CD4-positive, alpha-beta T cell (primary cell): ENCODE measurements at regions of chr7 and their contacts with region 1.

Region 1: DNA sequence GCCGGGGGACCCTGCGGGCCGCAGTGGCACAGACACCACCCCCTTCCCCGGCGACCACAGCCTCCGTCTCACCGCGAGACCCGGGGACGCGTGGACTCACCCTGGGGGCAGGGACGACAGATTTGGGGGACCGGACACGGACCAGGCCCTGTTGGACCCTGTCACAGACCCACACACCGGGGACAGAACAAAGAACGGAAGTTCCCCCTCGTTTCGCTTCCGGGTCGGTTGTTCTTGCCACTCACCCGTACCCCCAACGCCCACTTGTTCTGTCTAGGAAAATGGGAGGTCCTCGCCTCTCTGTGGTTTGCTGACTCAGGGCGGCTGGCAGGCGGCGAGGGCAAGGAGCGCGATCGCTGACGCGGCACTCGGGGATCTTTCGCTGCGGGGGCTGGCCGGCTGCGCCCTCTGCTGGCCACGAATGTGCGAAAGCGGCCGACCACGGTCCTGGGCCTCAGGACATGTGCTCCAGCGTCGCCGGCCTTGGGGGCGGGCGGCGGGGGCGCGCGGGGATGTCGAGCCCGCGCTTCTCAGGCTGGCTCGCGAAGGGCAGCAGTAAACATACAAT is at the start of gene ZNF3:
- DNase-seq: peak; percentile 92 to 99 (median 96)
- ATAC-seq: peak; percentile 85
- H3K4me3 ChIP-seq: peak within 1 kb of the TSS; percentile 84
- H3K4me3 Mint-ChIP-seq: peak within 1 kb of the TSS; percentile 90
- H3K27ac ChIP-seq: peak within 1 kb of the TSS; percentile 75 to 80
- H3K27ac Mint-ChIP-seq: peak within 1 kb of the TSS; percentile 83
- H3K4me1 ChIP-seq: peaks cover 36% of the 10 kb centered on the region
- H3K4me1 Mint-ChIP-seq: peaks cover 39% of the 10 kb centered on the region
- H3K27me3 ChIP-seq: no peaks in the 10 kb centered on the region
- H3K27me3 Mint-ChIP-seq: no peaks in the 10 kb centered on the region
- CTCF ChIP-seq: peak; percentile 96
- total RNA-seq, gene ZNF3: 38.3 to 40.3 TPM

Region 2: GRCh38 chr7:99098824-99099498 is 982.7 kb before region 1 on chr7:
- CTCF ChIA-PET with region 1: no interaction called
- POLR2A ChIA-PET with region 1: no interaction called
- intact Hi-C with region 1: no loop called
- DNase-seq: no peak
- ATAC-seq: no peak
- H3K4me3 ChIP-seq: no peak overlapping the region
- H3K4me3 Mint-ChIP-seq: no peak overlapping the region
- H3K27ac ChIP-seq: no peak overlapping the region
- H3K27ac Mint-ChIP-seq: no peak overlapping the region
- H3K4me1 ChIP-seq: no peaks in the 10 kb centered on the region
- H3K4me1 Mint-ChIP-seq: peaks cover 50% of the 10 kb centered on the region
- H3K27me3 ChIP-seq: no peaks in the 10 kb centered on the region
- H3K27me3 Mint-ChIP-seq: no peaks in the 10 kb centered on the region
- CTCF ChIP-seq: no peak

Region 3: GRCh38 chr7:99910976-99911375 is 170.6 kb before region 1 on chr7:
- CTCF ChIA-PET with region 1: no interaction called
- POLR2A ChIA-PET with region 1: no interaction called
- intact Hi-C with region 1: loop called (anchors 5 to 10 kb)
- DNase-seq: no peak
- ATAC-seq: no peak
- H3K4me3 ChIP-seq: no peak overlapping the region
- H3K4me3 Mint-ChIP-seq: no peak overlapping the region
- H3K27ac ChIP-seq: no peak overlapping the region
- H3K27ac Mint-ChIP-seq: no peak overlapping the region
- H3K4me1 ChIP-seq: peaks cover 13% of the 10 kb centered on the region
- H3K4me1 Mint-ChIP-seq: peaks cover 67% of the 10 kb centered on the region
- H3K27me3 ChIP-seq: no peaks in the 10 kb centered on the region
- H3K27me3 Mint-ChIP-seq: no peaks in the 10 kb centered on the region
- CTCF ChIP-seq: no peak

Region 4: GRCh38 chr7:100015232-100016209 is 66.1 kb before region 1 on chr7 and contains the start of gene ZKSCAN1:
- CTCF ChIA-PET with region 1: interaction called, 4 read pairs
- POLR2A ChIA-PET with region 1: interaction called, 4 read pairs
- intact Hi-C with region 1: loop called (anchors 1 to 5 kb)
- DNase-seq: peak; percentile 70 to 96 (median 81)
- ATAC-seq: peak; percentile 94
- H3K4me3 ChIP-seq: peak within 1 kb of the TSS; percentile 95
- H3K4me3 Mint-ChIP-seq: peak within 1 kb of the TSS; percentile 97
- H3K27ac ChIP-seq: peak within 1 kb of the TSS; percentile 76 to 91
- H3K27ac Mint-ChIP-seq: peak within 1 kb of the TSS; percentile 94
- H3K4me1 ChIP-seq: peaks cover 31% of the 10 kb centered on the region
- H3K4me1 Mint-ChIP-seq: peaks cover 39% of the 10 kb centered on the region
- H3K27me3 ChIP-seq: no peaks in the 10 kb centered on the region
- H3K27me3 Mint-ChIP-seq: no peaks in the 10 kb centered on the region
- CTCF ChIP-seq: no peak
- total RNA-seq, gene ZKSCAN1: 42.3 to 45.0 TPM

Region 5: DNA sequence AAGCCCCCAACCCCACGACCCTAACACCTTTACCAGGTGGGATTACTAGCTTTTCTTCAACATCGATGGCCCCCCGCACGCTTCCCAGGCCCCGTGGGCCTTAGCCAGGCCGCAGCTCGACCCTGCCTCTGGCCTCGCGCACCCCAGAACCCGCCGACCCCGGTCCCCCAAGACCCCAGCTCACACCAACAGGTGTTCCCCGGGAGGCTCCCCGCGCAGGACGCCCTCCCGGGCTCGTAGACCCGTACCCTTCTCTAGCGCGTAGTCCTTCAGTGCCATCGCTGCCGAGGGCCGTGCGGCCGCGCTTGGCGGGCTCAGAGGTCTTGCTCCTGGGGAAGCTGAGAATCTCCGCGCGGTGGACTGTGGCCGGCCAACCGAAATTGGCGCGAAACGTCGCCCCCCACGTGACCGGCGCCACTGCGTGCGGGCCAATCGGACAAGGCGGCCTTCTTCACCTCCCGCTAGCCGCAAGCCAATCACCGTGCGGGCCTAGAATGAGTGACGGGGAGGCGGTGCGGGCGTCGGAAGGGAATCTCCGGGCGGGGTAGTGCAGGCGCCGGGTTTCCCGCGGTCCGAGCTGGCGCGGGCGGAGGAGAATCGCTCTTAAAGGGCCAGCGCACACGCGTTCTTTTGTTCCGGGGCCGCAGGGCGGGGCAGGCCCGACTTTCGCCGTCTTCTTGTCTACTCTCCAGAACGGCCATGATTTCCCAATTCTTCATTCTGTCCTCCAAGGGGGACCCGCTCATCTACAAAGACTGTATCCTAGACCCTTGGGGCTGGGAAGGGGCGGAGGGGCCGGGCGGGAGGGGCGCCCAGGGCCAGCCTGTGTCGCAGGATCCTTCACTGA is 19.6 kb after region 1 on chr7 and contains the starts of genes AP4M1 and MCM7:
- CTCF ChIA-PET with region 1: interaction called, 14 read pairs
- POLR2A ChIA-PET with region 1: interaction called, 9 read pairs
- intact Hi-C with region 1: loop called (anchors 2 kb)
- DNase-seq: peak; percentile 87 to 98 (median 93)
- ATAC-seq: peak; percentile 85
- H3K4me3 ChIP-seq: peak within 1 kb of the TSS; percentile 97
- H3K4me3 Mint-ChIP-seq: peak within 1 kb of the TSS; percentile 98
- H3K27ac ChIP-seq: peak within 1 kb of the TSS; percentile 90 to 95
- H3K27ac Mint-ChIP-seq: peak within 1 kb of the TSS; percentile 98
- H3K4me1 ChIP-seq: peaks cover 38% of the 10 kb centered on the region
- H3K4me1 Mint-ChIP-seq: peaks cover 47% of the 10 kb centered on the region
- H3K27me3 ChIP-seq: no peaks in the 10 kb centered on the region
- H3K27me3 Mint-ChIP-seq: no peaks in the 10 kb centered on the region
- CTCF ChIP-seq: no peak
- total RNA-seq, gene AP4M1: 2.8 to 4.0 TPM
- total RNA-seq, gene MCM7: 54.5 to 56.0 TPM

Region 6: DNA sequence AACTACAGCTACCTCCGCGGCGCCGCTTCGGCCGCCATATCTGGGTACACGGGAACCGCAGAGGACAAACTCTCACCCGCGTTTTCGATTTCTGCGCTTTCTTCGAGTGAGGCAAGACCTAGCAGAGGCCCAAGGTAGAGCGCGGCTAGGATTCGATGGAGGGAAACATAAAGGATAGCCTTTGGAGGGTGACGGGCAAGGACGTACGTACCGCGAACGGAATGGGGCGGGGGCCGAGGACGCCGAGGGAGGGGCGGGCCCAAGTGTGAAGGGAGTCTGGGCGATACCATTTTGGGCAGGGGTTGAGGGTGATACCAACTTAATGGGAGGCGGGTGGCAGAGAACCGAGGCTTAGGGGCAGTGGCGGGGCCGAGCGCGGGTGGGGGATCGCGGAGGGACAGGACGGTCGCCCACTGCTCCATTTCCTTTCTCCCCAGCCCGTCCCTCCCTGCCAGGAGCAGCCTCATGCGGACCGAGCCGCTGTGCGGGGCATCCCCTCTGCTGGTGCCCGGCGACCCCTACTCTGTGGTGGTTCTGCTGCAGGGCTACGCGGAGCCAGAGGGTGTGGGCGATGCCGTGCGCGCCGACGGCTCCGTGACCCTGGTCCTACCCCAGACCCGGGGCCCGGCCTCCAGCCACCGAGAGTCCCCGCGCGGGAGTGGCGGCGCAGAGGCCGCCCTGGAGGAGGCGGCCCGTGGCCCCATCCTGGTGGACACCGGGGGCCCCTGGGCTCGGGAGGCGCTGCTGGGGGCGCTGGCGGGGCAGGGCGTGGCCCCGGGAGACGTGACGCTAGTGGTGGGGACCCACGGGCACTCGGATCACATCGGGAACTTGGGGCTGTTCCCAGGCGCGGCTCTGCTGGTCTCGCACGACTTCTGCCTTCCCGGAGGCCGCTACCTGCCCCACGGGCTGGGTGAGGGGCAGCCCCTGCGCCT is 45.6 kb after region 1 on chr7 and contains the start of gene MBLAC1:
- CTCF ChIA-PET with region 1: interaction called, 4 read pairs
- POLR2A ChIA-PET with region 1: interaction called, 6 read pairs
- intact Hi-C with region 1: loop called in 1 of 2 experiments (anchors 2 kb)
- DNase-seq: peak; percentile 87 to 97 (median 91)
- ATAC-seq: peak; percentile 80
- H3K4me3 ChIP-seq: peak within 1 kb of the TSS; percentile 96
- H3K4me3 Mint-ChIP-seq: peak within 1 kb of the TSS; percentile 100
- H3K27ac ChIP-seq: peak within 1 kb of the TSS; percentile 96 to 99
- H3K27ac Mint-ChIP-seq: peak within 1 kb of the TSS; percentile 100
- H3K4me1 ChIP-seq: peaks cover 39% of the 10 kb centered on the region
- H3K4me1 Mint-ChIP-seq: peaks cover 31% of the 10 kb centered on the region
- H3K27me3 ChIP-seq: no peaks in the 10 kb centered on the region
- H3K27me3 Mint-ChIP-seq: no peaks in the 10 kb centered on the region
- CTCF ChIP-seq: no peak
- total RNA-seq, gene MBLAC1: 3.7 to 4.4 TPM

Region 7: GRCh38 chr7:100208911-100209408 is 127.3 kb after region 1 on chr7:
- CTCF ChIA-PET with region 1: no interaction called
- POLR2A ChIA-PET with region 1: no interaction called
- intact Hi-C with region 1: no loop called
- DNase-seq: peak in 4 of 14 experiments; percentile 43 to 63 (median 48)
- ATAC-seq: peak; percentile 53
- H3K4me3 ChIP-seq: peak overlapping the region; percentile 11
- H3K4me3 Mint-ChIP-seq: peak overlapping the region; percentile 43
- H3K27ac ChIP-seq: no peak overlapping the region
- H3K27ac Mint-ChIP-seq: peak overlapping the region; percentile 82
- H3K4me1 ChIP-seq: peaks cover 38% of the 10 kb centered on the region
- H3K4me1 Mint-ChIP-seq: peaks cover 50% of the 10 kb centered on the region
- H3K27me3 ChIP-seq: no peaks in the 10 kb centered on the region
- H3K27me3 Mint-ChIP-seq: no peaks in the 10 kb centered on the region
- CTCF ChIP-seq: no peak